ENCODE measurements at regions of chr14 and their contacts with region 1.

Region 1: GRCh38 chr14:50860478-50861086 is 11.3 kb upstream of the ABHD12B start:
- DNase-seq: peak; percentile 89
- H3K4me3 Mint-ChIP-seq: peak overlapping the region; percentile 83
- H3K27ac Mint-ChIP-seq: peak overlapping the region; percentile 47
- H3K4me1 Mint-ChIP-seq: peaks cover 12% of the 10 kb centered on the region
- H3K27me3 Mint-ChIP-seq: peaks cover 7% of the 10 kb centered on the region

Region 2: GRCh38 chr14:50599700-50600444 is 260.7 kb before region 1 on chr14:
- CTCF ChIA-PET with region 1: interaction called, 29 read pairs
- POLR2A ChIA-PET with region 1: no interaction called
- DNase-seq: no peak
- H3K4me3 Mint-ChIP-seq: no peak overlapping the region
- H3K27ac Mint-ChIP-seq: no peak overlapping the region
- H3K4me1 Mint-ChIP-seq: peaks cover 2% of the 10 kb centered on the region
- H3K27me3 Mint-ChIP-seq: no peaks in the 10 kb centered on the region

Region 3: DNA sequence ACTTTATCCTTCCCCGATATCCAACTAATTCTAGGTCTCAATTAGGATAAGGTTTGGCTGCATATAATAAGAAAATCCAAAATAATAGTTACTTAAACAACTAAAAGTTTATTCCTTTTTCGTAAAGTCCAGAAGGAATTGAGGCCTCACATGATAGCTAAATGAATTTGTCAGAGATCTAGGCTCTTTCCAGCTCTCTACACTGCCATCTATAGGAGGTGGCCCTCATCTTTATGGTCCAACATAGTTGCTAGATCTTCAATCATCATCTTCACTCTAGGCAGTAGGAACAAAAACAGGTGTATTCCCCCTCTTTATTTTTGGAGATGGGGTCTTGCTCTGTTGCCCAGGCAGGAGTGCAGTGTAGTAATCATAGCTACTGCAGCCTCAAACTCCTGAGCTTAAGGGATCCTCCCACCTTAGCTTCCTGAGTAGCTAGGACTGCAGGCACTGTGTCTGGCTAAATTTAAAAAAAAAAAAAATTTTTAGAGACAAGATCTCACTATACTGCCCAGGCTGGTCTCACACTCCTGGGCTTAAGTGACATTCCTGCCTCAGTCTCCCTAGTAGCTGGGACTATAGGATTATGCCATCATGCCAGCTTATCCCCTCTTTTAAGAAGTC is 146.0 kb before region 1 on chr14:
- CTCF ChIA-PET with region 1: interaction called, 12 read pairs
- POLR2A ChIA-PET with region 1: no interaction called
- DNase-seq: no peak
- H3K4me3 Mint-ChIP-seq: no peak overlapping the region
- H3K27ac Mint-ChIP-seq: no peak overlapping the region
- H3K4me1 Mint-ChIP-seq: no peaks in the 10 kb centered on the region
- H3K27me3 Mint-ChIP-seq: no peaks in the 10 kb centered on the region

Region 4: DNA sequence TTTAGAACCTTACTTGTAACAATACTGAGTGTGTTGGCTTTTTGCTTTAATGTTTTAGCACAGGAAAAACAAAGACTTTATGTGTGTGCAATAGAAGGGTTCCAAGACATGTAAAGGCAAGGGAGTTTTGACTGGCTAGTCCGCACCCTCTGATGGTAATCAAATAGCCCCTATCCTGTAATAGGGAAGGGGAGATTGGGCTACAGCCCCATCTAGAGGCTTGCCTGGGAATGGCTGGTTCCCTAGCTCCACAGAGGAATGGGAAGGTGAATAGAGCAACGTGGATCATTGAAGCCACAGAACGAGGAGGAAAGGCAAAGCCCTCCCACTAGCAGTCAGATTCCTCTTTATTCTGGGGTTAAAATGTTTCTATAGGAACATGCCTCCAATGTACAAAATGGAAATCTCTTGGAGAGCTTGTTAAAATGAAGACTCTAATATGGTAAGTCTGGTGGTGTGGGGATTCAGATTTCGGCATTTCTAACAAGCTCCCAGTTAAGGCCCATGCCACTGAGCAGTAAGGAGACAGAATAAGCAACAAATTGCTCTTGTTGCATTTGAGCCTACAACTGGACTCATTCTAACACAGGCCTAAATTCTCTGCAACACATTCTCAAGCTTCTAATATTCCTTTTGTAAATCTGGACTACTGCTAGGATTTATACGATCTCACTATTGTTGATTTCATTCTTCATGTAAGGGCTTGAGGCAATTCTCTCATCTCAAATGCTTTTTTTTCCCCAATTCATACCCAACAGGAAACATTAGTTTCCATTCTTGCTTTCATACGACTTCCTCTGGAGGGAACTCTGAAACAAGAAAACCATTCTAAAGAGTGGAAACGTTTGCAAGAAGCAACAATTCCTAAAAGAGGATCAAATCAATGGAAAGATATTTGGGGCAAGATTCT is 86.7 kb before region 1 on chr14:
- CTCF ChIA-PET with region 1: interaction called, 56 read pairs
- POLR2A ChIA-PET with region 1: interaction called, 10 read pairs
- DNase-seq: peak; percentile 29
- H3K4me3 Mint-ChIP-seq: no peak overlapping the region
- H3K27ac Mint-ChIP-seq: no peak overlapping the region
- H3K4me1 Mint-ChIP-seq: peaks cover 16% of the 10 kb centered on the region
- H3K27me3 Mint-ChIP-seq: no peaks in the 10 kb centered on the region

Region 5: DNA sequence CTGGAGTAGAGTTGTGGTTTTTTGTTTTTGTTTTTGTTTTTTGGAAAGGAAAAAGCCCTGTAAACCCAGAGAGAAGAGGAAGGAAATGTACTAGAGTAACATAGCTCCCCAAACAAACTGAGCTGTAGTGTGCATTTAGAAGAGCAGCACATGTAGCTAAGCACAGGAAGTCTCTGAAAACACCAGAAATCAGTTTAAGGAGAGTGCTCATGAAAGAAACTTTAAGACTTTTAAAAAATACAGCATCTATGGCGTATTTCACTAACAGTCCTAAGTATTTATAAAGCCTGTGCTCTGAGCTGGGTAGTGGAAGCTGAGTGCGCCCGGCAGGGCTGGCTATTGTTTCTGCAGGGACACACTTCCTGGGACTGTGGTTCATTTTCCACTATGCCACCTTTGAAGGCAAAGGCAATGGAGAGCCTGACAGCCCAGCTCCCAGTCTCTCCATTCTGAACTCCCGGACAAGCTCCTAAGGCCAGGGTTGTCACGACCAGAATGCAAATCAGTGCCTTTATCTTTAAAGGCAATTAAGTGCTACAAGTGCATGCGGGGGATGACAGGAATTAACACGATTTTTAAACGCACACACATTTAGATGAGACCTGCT is 75.0 kb before region 1 on chr14:
- CTCF ChIA-PET with region 1: interaction called, 15 read pairs
- POLR2A ChIA-PET with region 1: interaction called, 12 read pairs
- DNase-seq: no peak
- H3K4me3 Mint-ChIP-seq: no peak overlapping the region
- H3K27ac Mint-ChIP-seq: peak overlapping the region; percentile 76
- H3K4me1 Mint-ChIP-seq: peaks cover 51% of the 10 kb centered on the region
- H3K27me3 Mint-ChIP-seq: no peaks in the 10 kb centered on the region

Region 6: GRCh38 chr14:50830932-50831725 is 29.5 kb before region 1 on chr14 and contains the start of gene NIN:
- CTCF ChIA-PET with region 1: interaction called, 23 read pairs
- POLR2A ChIA-PET with region 1: interaction called, 19 read pairs
- DNase-seq: peak; percentile 75
- H3K4me3 Mint-ChIP-seq: peak within 1 kb of the TSS; percentile 90
- H3K27ac Mint-ChIP-seq: peak within 1 kb of the TSS; percentile 79
- H3K4me1 Mint-ChIP-seq: peaks cover 34% of the 10 kb centered on the region
- H3K27me3 Mint-ChIP-seq: peaks cover 13% of the 10 kb centered on the region
- total RNA-seq, gene NIN: 50.3 to 56.5 TPM

Region 7: DNA sequence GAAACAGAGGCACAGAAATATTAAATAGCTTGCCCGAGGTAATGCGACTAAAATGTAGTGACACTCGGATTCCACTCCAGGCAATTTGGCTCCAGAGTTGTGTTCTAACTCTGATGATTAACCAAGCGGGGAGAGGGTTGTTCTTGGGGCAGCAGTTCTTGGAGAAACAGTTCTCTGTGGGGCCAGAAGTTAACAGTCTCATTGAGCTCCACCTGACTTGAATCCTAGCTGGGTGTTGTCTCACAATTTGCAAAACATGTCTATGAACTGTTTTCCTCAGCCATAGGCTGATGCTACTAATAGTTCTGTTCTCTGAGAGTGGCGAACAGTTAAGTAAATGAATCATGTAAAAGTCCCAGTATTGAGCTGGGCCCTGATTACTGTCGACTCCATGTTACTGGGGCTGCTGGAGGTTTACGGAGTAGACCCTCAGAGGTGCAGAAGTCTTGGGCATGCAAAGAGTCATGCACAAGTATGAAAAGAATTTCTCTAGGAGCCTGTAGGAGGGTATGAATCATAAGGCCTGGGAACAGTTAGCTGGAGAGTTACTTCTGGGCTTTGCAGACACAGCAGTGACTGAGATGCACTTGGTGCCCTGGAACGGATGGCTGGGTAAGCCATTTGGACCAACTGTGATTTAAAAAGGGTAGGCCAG is 14.2 kb before region 1 on chr14:
- CTCF ChIA-PET with region 1: interaction called, 26 read pairs
- POLR2A ChIA-PET with region 1: no interaction called
- DNase-seq: no peak
- H3K4me3 Mint-ChIP-seq: no peak overlapping the region
- H3K27ac Mint-ChIP-seq: no peak overlapping the region
- H3K4me1 Mint-ChIP-seq: no peaks in the 10 kb centered on the region
- H3K27me3 Mint-ChIP-seq: peaks cover 16% of the 10 kb centered on the region